ENCODE measurements at regions of chr9 and their contacts with region 1.

Region 1: DNA sequence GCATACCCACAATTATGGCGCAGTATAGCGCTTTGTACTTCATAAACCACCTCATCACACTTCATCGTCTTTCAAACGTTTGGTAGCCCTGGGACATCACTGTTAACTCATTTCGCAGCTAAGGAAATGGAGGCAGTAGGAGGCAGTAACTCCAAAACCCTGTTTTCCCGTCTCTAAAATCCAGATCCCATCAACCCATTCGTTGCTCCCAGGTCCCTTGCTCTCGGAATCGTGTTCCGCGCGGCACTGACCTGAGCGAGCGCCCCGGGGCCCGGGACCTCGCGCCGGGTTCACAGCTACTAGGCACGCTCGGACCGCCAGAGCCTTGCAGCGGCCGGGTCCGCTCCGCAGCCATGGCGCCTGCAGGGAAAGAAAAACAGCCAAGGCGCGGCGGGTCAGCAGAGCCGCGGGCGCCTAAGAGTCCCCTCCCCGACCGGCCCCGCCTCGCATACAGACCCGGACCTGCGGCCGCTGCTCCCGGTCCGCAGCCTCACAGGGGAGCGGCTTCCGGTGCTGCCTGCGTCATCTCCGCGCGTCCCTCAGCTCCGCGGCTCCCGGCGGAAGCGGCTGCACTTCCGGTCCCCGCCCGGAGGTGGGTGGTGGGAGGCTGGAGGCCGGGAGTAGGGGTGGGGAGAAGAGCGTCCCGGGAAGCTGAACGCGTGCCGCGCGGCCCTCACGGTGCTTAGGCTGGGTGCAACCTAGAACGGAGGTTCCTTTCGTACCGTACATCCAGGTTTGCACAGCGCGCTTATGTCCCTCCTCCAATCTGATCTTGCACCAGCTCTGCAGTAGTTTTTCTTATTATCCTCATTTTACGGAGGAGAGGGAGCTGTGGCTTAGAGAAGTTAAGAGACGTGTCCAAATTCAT is at the start of gene FBXW2:
- DNase-seq: peak; percentile 65 to 96 (median 78)
- ATAC-seq: peak; percentile 91
- H3K4me3 ChIP-seq: peak within 1 kb of the TSS; percentile 66
- H3K4me3 Mint-ChIP-seq: peak within 1 kb of the TSS; percentile 91 to 98 (median 96)
- H3K27ac ChIP-seq: peak within 1 kb of the TSS; percentile 92
- H3K27ac Mint-ChIP-seq: peak within 1 kb of the TSS; percentile 88 to 98 (median 95)
- H3K4me1 ChIP-seq: peaks cover 28 to 34% of the 10 kb centered on the region in 2 donors
- H3K4me1 Mint-ChIP-seq: peaks cover 34 to 65% (median 58%) of the 10 kb centered on the region in 7 donors
- H3K27me3 ChIP-seq: no peaks in the 10 kb centered on the region
- H3K27me3 Mint-ChIP-seq: no peaks in the 10 kb centered on the region
- total RNA-seq, gene FBXW2: 72.5 to 90.3 (median 77.9) TPM

Region 2: DNA sequence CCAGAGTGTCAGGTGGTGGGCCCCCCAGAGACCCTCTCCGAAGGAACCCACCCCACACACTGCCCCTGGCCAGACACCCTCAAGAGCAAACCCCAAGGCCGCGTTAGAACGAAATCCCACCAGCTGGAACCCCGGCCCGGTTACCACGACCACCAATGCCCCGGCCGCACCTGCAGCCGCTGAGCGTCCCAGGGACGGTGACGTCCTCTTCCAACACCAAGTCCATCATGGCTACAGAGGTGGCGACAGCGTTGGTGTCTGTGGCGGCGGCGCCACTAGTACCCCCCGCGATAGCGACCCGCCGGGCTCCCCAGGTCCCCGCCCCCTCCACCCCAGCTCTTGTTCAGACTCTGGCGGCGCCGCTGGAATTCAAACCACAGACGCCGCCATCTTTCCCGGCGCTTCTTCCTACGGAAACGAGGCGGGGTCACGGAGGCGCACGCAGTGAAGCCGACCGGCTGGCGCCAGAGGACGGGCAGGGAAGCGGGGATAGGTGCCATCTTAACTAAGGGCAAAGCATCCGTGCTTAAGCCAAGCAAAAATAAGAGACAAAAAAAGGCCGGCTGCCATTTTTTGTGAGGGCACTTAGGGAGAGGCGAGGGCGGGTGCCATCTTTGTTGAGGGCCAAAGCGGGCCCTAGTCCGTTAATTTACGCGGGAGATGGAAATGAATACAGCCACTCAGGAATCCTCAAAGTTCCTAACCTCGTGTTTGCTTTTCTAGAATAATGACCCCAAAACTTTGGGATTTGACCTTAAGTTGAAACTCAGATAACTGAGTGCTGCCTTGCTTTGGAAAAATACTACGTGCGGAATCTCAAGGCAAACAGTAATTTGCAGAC is 213.2 kb before region 1 on chr9 and contains the start of gene CDK5RAP2:
- CTCF ChIA-PET with region 1: no interaction called
- POLR2A ChIA-PET with region 1: no interaction called
- intact Hi-C with region 1: loop called in 1 of 2 experiments (anchors 1 kb)
- DNase-seq: peak; percentile 77 to 94 (median 92)
- ATAC-seq: peak; percentile 99
- H3K4me3 ChIP-seq: peak within 1 kb of the TSS; percentile 85
- H3K4me3 Mint-ChIP-seq: peak within 1 kb of the TSS; percentile 86 to 98 (median 94)
- H3K27ac ChIP-seq: peak within 1 kb of the TSS; percentile 81
- H3K27ac Mint-ChIP-seq: peak within 1 kb of the TSS; percentile 88 to 95 (median 91)
- H3K4me1 ChIP-seq: peaks cover 15 to 17% of the 10 kb centered on the region in 2 donors
- H3K4me1 Mint-ChIP-seq: peaks cover 29 to 68% (median 62%) of the 10 kb centered on the region in 7 donors
- H3K27me3 ChIP-seq: no peaks in the 10 kb centered on the region
- H3K27me3 Mint-ChIP-seq: peaks cover 0 to 3% (median 0%) of the 10 kb centered on the region in 5 donors
- total RNA-seq, gene CDK5RAP2: 62.2 to 98.1 (median 78.1) TPM

Region 3: GRCh38 chr9:120714088-120714845 is 78.9 kb before region 1 on chr9 and contains the start of gene MEGF9:
- CTCF ChIA-PET with region 1: no interaction called
- POLR2A ChIA-PET with region 1: interaction called, 5 read pairs
- intact Hi-C with region 1: loop called (anchors 1 to 2 kb)
- DNase-seq: peak; percentile 90 to 97 (median 94)
- ATAC-seq: peak; percentile 98
- H3K4me3 ChIP-seq: peak within 1 kb of the TSS; percentile 85
- H3K4me3 Mint-ChIP-seq: peak within 1 kb of the TSS; percentile 82 to 98 (median 87)
- H3K27ac ChIP-seq: peak within 1 kb of the TSS; percentile 79
- H3K27ac Mint-ChIP-seq: peak within 1 kb of the TSS; percentile 31 to 98 (median 87)
- H3K4me1 ChIP-seq: peaks cover 22% of the 10 kb centered on the region in 2 donors
- H3K4me1 Mint-ChIP-seq: peaks cover 18 to 43% (median 36%) of the 10 kb centered on the region in 7 donors
- H3K27me3 ChIP-seq: no peaks in the 10 kb centered on the region
- H3K27me3 Mint-ChIP-seq: no peaks in the 10 kb centered on the region
- total RNA-seq, gene MEGF9: 9.5 to 35.4 (median 11.1) TPM

Region 4: GRCh38 chr9:120778758-120779157 is 14.4 kb before region 1 on chr9:
- CTCF ChIA-PET with region 1: interaction called, 4 read pairs
- POLR2A ChIA-PET with region 1: interaction called, 14 read pairs
- intact Hi-C with region 1: no loop called
- DNase-seq: no peak
- ATAC-seq: no peak
- H3K4me3 ChIP-seq: no peak overlapping the region
- H3K4me3 Mint-ChIP-seq: no peak overlapping the region
- H3K27ac ChIP-seq: no peak overlapping the region
- H3K27ac Mint-ChIP-seq: peak overlapping the region in 2 of 9 donors; percentile 76 to 79
- H3K4me1 ChIP-seq: peaks cover 0 to 8% of the 10 kb centered on the region in 2 donors
- H3K4me1 Mint-ChIP-seq: peaks cover 7 to 33% (median 23%) of the 10 kb centered on the region in 7 donors
- H3K27me3 ChIP-seq: no peaks in the 10 kb centered on the region
- H3K27me3 Mint-ChIP-seq: no peaks in the 10 kb centered on the region

Region 5: DNA sequence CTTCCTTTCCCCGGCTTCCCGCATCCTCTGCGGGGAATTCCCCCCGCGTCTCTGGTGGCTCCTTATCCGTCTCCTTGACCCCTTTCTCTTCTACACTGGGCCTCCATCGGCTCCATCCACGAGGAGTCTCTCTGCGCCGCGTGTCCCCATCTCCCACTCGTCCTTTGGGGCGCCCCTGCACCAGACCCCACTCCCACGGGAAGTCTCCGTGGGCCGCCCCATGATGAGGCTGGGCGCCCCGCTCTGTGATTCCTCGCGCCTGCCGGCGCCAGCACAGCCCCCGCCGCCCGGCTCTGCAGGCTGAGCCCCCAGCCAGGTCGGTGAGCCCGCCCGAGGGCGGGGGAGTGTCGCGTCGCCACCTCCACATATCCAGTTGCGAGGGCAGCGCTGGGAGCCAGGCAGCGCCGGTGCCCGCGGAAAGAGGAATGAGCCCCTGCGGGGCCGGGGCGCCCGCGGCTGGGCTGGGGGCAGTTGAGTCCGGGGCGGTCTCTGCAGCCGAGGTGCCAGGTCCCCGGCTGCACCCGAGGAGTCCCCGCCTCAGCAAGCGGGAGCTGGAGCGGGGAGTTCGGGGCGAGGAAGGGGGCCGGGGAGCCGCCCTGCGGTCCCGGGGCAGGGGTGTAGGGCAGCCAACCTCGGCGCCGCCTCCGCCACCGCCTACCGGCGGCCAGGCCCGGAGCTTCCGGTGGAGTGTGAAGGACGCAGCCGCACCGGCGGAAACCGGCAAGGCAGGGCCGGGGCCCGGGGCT is 135.5 kb after region 1 on chr9:
- CTCF ChIA-PET with region 1: interaction called, 5 read pairs
- POLR2A ChIA-PET with region 1: interaction called, 14 read pairs
- intact Hi-C with region 1: loop called in 1 of 2 experiments (anchors 2 kb)
- DNase-seq: peak; percentile 63 to 86 (median 74)
- ATAC-seq: peak; percentile 58
- H3K4me3 ChIP-seq: peak overlapping the region; percentile 79
- H3K4me3 Mint-ChIP-seq: peak overlapping the region; percentile 90 to 100 (median 96)
- H3K27ac ChIP-seq: peak overlapping the region; percentile 97
- H3K27ac Mint-ChIP-seq: peak overlapping the region; percentile 95 to 100 (median 99)
- H3K4me1 ChIP-seq: peaks cover 62 to 84% of the 10 kb centered on the region in 2 donors
- H3K4me1 Mint-ChIP-seq: peaks cover 57 to 95% (median 86%) of the 10 kb centered on the region in 7 donors
- H3K27me3 ChIP-seq: no peaks in the 10 kb centered on the region
- H3K27me3 Mint-ChIP-seq: no peaks in the 10 kb centered on the region

Region 6: GRCh38 chr9:120936011-120936763 is 143.1 kb after region 1 on chr9:
- CTCF ChIA-PET with region 1: no interaction called
- POLR2A ChIA-PET with region 1: interaction called, 14 read pairs
- intact Hi-C with region 1: loop called in 1 of 2 experiments (anchors 2 kb)
- DNase-seq: peak; percentile 71 to 89 (median 82)
- ATAC-seq: peak; percentile 85
- H3K4me3 ChIP-seq: peak overlapping the region; percentile 21
- H3K4me3 Mint-ChIP-seq: peak overlapping the region; percentile 33 to 77 (median 62)
- H3K27ac ChIP-seq: peak overlapping the region; percentile 97
- H3K27ac Mint-ChIP-seq: peak overlapping the region; percentile 88 to 100 (median 98)
- H3K4me1 ChIP-seq: peaks cover 61% of the 10 kb centered on the region in 2 donors
- H3K4me1 Mint-ChIP-seq: peaks cover 31 to 71% (median 63%) of the 10 kb centered on the region in 7 donors
- H3K27me3 ChIP-seq: no peaks in the 10 kb centered on the region
- H3K27me3 Mint-ChIP-seq: peaks cover 0 to 2% (median 0%) of the 10 kb centered on the region in 5 donors

Region 7: DNA sequence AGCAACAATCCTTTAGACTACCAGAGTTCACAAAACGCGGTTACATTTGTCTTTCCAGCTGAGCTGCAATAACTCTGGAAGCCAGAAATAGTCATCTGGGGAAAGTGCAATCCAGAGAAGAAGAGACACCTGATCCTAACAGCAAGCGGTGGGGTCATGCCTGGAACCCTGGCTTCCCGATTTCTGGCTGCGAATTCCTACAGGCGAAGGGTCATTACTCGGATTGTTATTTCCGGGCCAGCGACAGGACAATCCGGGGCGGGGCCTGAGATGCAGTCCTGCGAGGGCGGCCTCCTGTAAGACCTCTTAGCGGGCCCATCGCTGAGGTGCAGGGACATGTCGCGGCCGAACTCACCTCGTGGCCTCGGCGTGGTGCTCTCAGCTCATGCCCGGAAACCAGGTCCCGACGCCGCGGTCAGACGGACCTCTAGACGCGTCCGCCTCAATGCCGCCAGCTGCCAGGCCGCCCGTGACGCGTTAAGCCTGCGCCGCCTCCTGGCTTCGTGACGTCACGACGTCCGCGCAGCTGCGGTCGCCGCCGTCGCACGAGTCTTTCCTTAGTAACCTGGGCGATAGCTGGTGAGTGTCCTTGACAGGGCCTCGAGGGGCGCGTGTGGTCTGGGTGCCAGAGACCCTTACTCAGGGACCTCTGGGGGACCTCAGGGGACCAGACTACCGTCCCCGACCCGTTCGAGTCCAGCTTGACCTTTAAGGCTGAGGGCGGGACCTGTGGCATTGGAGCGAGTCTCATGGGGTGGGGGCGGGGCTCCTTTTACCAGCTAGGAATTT is 1471.4 kb after region 1 on chr9 and contains the starts of genes MRRF and RBM18:
- CTCF ChIA-PET with region 1: no interaction called
- POLR2A ChIA-PET with region 1: no interaction called
- intact Hi-C with region 1: loop called in 1 of 2 experiments (anchors 2 kb)
- DNase-seq: peak; percentile 80 to 93 (median 88)
- ATAC-seq: peak; percentile 92
- H3K4me3 ChIP-seq: peak within 1 kb of the TSS; percentile 93
- H3K4me3 Mint-ChIP-seq: peak within 1 kb of the TSS; percentile 88 to 100 (median 98)
- H3K27ac ChIP-seq: peak within 1 kb of the TSS; percentile 94
- H3K27ac Mint-ChIP-seq: peak within 1 kb of the TSS; percentile 76 to 100 (median 99)
- H3K4me1 ChIP-seq: peaks cover 18 to 25% of the 10 kb centered on the region in 2 donors
- H3K4me1 Mint-ChIP-seq: peaks cover 40 to 71% (median 61%) of the 10 kb centered on the region in 7 donors
- H3K27me3 ChIP-seq: no peaks in the 10 kb centered on the region
- H3K27me3 Mint-ChIP-seq: peaks cover 0 to 2% (median 0%) of the 10 kb centered on the region in 5 donors
- total RNA-seq, gene MRRF: 28.1 to 35.8 (median 33.3) TPM
- total RNA-seq, gene RBM18: 14.2 to 22.9 (median 15.8) TPM

Measured in naive thymus-derived CD4-positive, alpha-beta T cell (primary cell).